HEK293T (cell line): ENCODE measurements at regions of chr6 and their contacts with region 1.

Region 1: GRCh38 chr6:108492131-108492766 is 68.5 kb upstream of the FOXO3 start:
- DNase-seq: peak; percentile 25

Region 2: DNA sequence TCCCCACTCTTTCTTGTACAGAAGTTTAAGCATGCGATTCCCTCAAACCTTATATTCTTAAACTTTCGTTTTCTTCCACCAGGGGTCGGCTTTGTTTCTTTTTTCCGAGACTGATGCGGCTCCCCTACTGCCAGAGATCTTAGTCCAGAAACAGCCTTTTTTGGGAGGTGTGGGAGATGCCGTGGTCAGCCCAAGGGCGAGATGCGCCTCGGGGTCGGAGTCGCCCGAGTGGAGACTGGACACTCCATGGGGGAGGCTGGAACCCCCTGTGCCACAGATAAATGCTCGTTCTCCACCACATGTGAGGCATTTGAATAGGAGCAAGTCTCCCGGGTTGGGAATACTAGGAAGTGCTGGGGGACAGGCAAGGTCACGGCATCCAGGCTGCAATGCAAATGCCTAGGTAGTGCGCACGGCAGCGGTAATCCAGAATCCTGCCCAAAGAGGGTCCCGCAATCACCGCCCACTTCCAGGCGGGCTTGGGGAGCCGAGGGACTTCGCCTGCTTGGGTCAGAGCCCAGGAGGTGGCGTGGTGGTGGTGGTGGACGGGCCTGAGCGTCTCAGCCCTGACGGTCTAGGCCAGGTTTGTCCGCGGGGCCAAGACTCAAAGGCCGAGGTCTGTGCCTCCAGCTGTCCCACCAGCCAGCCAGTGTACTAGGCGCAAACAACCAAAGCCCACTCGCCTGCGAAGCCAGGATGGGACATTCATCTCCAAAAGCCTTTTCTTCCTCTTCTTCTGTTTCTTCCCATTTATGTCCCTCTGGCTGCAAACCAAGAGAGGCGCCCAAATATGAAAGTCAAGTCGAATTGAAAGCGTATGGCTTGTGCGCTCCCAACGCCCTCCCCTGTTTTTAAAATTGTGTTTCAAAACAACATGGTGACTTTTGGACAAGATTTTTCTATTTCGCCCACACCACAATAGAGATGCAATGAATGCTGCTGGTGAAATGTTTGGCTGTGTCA is 378.4 kb before region 1 on chr6:
- CTCF ChIA-PET with region 1: interaction called, 22 read pairs
- POLR2A ChIA-PET with region 1: no interaction called
- DNase-seq: peak; percentile 63

Region 3: GRCh38 chr6:108341372-108341771 is 150.9 kb before region 1 on chr6:
- CTCF ChIA-PET with region 1: no interaction called
- POLR2A ChIA-PET with region 1: no interaction called
- DNase-seq: no peak